ENCODE measurements at regions of chr22 and their contacts with region 1.

Region 1: GRCh38 chr22:48477031-48477721 is 1350.5 kb downstream of the BRD1 start:
- DNase-seq: no peak
- ATAC-seq: no peak
- H3K4me3 ChIP-seq: no peak overlapping the region
- H3K27ac ChIP-seq: no peak overlapping the region
- H3K4me1 ChIP-seq: no peaks in the 10 kb centered on the region
- H3K27me3 ChIP-seq: peaks cover 5 to 50% of the 10 kb centered on the region in 2 experiments; a peak in 4 of 5 replicates
- CTCF ChIP-seq: no peak
- EP300 ChIP-seq: no peak
- POLR2A ChIP-seq: no peak
- RAD21 ChIP-seq: no peak

Region 2: GRCh38 chr22:48393041-48393370 is 84.2 kb before region 1 on chr22:
- CTCF ChIA-PET with region 1: no interaction called
- POLR2A ChIA-PET with region 1: no interaction called
- in situ Hi-C with region 1: no loop called
- intact Hi-C with region 1: no loop called
- DNase-seq: no peak
- ATAC-seq: no peak
- H3K4me3 ChIP-seq: no peak overlapping the region
- H3K27ac ChIP-seq: no peak overlapping the region
- H3K4me1 ChIP-seq: peaks cover 14% of the 10 kb centered on the region
- H3K27me3 ChIP-seq: peaks cover 0 to 27% of the 10 kb centered on the region in 2 experiments; a peak in 1 of 5 replicates
- CTCF ChIP-seq: no peak
- EP300 ChIP-seq: no peak
- POLR2A ChIP-seq: no peak
- RAD21 ChIP-seq: no peak

Region 3: GRCh38 chr22:48416586-48417224 is 60.5 kb before region 1 on chr22:
- CTCF ChIA-PET with region 1: no interaction called
- POLR2A ChIA-PET with region 1: no interaction called
- in situ Hi-C with region 1: loop called (anchors 10 kb)
- intact Hi-C with region 1: no loop called
- DNase-seq: no peak
- ATAC-seq: no peak
- H3K4me3 ChIP-seq: no peak overlapping the region
- H3K27ac ChIP-seq: no peak overlapping the region
- H3K4me1 ChIP-seq: no peaks in the 10 kb centered on the region
- H3K27me3 ChIP-seq: peaks cover 1 to 68% of the 10 kb centered on the region in 2 experiments; a peak in 4 of 5 replicates
- CTCF ChIP-seq: no peak
- EP300 ChIP-seq: no peak
- POLR2A ChIP-seq: no peak
- RAD21 ChIP-seq: no peak